Cardiac septum (tissue), 1 donor: ENCODE measurements at regions of chr2 and their contacts with region 1.

Region 1: GRCh38 chr2:12282780-12283695 is 433.7 kb upstream of the TRIB2 start:
- DNase-seq: no peak

Region 2: GRCh38 chr2:12176623-12177454 is 106.2 kb before region 1 on chr2:
- intact Hi-C with region 1: loop called (anchors 10 kb)
- DNase-seq: no peak

Region 3: GRCh38 chr2:12223732-12224131 is 59.3 kb before region 1 on chr2:
- intact Hi-C with region 1: no loop called
- DNase-seq: no peak